ENCODE measurements at regions of chr20 and their contacts with region 1.

Region 1: DNA sequence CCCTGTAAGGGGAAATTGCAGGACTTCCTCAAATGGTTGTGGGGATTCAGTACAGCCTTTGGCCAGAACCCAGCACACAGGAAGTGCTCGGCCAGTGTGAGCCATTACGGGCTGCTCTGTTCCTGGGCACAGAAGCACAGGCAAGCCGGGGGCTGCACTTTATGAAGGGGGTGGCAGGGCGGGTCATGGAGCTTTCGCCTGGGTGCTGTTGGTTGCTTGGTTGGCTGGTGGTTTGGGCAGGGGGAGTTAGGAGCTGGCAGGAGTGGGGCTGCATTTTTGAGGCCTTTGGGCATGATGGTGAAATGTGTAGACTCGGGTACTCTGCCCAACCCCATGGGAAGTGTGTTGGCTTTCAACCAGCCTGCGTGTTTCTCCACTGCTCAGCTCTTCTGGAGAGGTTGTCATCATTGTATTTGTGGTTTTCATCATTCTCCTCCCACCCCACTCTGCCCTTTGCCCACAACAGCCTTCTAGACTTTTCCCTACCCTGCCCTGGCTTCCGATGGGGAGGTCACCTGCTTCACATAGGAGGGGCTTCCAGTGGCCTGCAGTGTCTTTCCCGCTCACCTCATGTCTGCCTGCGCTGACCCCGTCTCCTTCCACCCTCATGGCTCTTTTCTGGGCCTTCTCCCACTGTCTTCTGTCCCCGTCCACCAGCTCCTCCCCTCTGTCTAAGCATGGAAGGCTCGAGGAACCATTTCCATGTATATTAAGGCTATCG is 16.1 kb upstream of the RBM38 start:
- DNase-seq: peak; percentile 88 to 95 (median 91)
- H3K4me3 ChIP-seq: peak overlapping the region; percentile 18 to 82 (median 40)
- H3K4me3 Mint-ChIP-seq: peak overlapping the region; percentile 88 to 93
- H3K27ac ChIP-seq: peak overlapping the region; percentile 71 to 87
- H3K27ac Mint-ChIP-seq: peak overlapping the region; percentile 97 to 99 (median 98)
- H3K4me1 ChIP-seq: peaks cover 25 to 33% of the 10 kb centered on the region in 2 donors
- H3K4me1 Mint-ChIP-seq: peaks cover 39% of the 10 kb centered on the region
- H3K27me3 ChIP-seq: no peaks in the 10 kb centered on the region
- H3K27me3 Mint-ChIP-seq: peaks cover 0 to 6% (median 0%) of the 10 kb centered on the region in 3 donors
- CTCF ChIP-seq: no peak

Region 2: DNA sequence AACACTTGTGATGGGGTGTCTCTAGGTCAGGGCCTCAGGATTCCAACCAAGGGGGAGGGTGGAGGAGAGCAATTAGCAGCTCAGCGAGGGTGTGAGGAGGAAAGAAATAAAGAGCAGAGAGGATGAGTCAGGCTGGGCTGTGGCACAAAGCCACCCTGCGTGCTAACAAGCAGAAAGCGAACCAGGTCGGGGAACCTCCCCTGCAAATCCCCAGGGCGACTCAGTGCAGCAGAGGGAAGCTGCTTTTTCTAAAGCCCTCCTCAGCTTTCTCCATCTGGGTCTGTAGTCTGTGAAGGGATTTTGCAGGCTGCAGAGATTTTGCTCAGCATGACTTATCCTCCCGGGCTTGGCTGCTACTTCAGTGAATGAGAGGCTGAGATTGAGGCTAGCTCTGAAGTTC is 52.1 kb before region 1 on chr20:
- intact Hi-C with region 1: no loop called
- DNase-seq: no peak
- H3K4me3 ChIP-seq: no peak overlapping the region
- H3K4me3 Mint-ChIP-seq: peak overlapping the region in 1 of 2 donors; percentile 54
- H3K27ac ChIP-seq: no peak overlapping the region
- H3K27ac Mint-ChIP-seq: no peak overlapping the region
- H3K4me1 ChIP-seq: no peaks in the 10 kb centered on the region
- H3K4me1 Mint-ChIP-seq: no peaks in the 10 kb centered on the region
- H3K27me3 ChIP-seq: peaks cover 6 to 21% of the 10 kb centered on the region in 2 donors
- H3K27me3 Mint-ChIP-seq: peaks cover 22 to 56% (median 37%) of the 10 kb centered on the region in 3 donors
- CTCF ChIP-seq: no peak

Region 3: GRCh38 chr20:57718490-57719271 is 343.6 kb after region 1 on chr20:
- intact Hi-C with region 1: loop called in 1 of 2 experiments (anchors 10 kb)
- DNase-seq: peak; percentile 89 to 94 (median 91)
- H3K4me3 ChIP-seq: peak overlapping the region in 1 of 3 experiments; percentile 34
- H3K4me3 Mint-ChIP-seq: peak overlapping the region; percentile 55 to 73
- H3K27ac ChIP-seq: no peak overlapping the region
- H3K27ac Mint-ChIP-seq: no peak overlapping the region
- H3K4me1 ChIP-seq: peaks cover 9 to 10% of the 10 kb centered on the region in 2 donors
- H3K4me1 Mint-ChIP-seq: peaks cover 5% of the 10 kb centered on the region
- H3K27me3 ChIP-seq: no peaks in the 10 kb centered on the region
- H3K27me3 Mint-ChIP-seq: peaks cover 9 to 34% (median 16%) of the 10 kb centered on the region in 3 donors
- CTCF ChIP-seq: no peak

Measured in CD14-positive monocyte (primary cell).